ENCODE measurements at regions of chr11 and their contacts with region 1.

Region 1: DNA sequence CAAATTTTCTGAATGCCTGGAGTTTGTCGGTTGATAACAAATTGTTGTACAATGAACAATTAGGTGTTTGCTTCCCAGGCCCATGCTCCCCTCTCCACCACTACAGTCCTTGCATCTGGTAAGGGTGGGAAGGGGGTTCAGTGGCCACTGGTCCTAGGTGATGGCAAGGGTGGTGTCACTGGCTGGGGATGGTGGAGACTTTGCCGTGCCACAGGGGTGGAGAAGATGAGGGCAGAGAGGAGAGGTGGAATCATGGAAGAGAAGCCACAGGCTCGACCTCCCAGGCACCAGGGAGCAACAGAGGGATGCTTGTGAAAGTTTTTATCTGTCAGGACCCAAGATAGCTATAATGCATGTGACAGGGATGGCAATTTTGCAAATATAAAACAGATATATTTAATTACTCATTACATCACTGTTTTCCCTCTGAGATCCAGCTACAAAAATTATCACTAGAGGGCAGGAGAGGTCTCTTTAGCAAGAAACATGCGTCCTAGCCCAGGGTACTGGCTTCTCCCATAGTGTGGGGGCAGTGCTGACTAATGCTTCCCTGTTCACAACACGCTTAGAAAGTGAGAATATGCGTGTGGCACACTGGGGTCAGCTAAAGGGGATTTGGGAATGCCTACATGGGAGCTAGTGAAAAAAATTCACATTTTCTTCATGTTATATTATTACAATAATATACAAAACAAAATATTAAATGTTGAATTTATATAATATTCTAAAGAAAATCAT is 49.0 kb upstream of the AMPD3 start:
- DNase-seq: peak; percentile 81
- ATAC-seq: peak; percentile 87
- H3K4me3 ChIP-seq: no peak overlapping the region
- H3K27ac ChIP-seq: no peak overlapping the region
- H3K4me1 ChIP-seq: no peaks in the 10 kb centered on the region
- H3K27me3 ChIP-seq: no peaks in the 10 kb centered on the region

Region 2: GRCh38 chr11:10338287-10338686 is 67.7 kb before region 1 on chr11:
- intact Hi-C with region 1: no loop called
- DNase-seq: no peak
- ATAC-seq: peak; percentile 52
- H3K4me3 ChIP-seq: no peak overlapping the region
- H3K27ac ChIP-seq: no peak overlapping the region
- H3K4me1 ChIP-seq: no peaks in the 10 kb centered on the region
- H3K27me3 ChIP-seq: no peaks in the 10 kb centered on the region

Region 3: DNA sequence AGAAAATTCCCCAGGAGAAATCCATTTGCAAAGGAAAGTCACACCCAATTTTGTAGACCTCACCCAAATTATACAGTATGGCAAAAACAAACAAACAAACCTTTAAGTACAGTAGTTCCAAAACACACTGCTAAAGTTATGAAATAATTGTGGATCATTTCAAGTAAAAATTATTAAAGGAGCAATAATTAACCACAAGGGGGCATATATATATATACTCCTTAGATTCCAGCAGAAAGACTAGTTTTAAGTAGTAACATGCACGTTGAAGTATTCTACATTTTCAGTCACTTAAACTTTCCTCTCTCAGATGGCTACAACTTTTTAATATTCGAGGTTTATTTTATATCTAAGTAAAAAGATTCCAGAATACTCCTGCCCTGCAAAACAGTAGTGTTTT is 108.2 kb after region 1 on chr11:
- intact Hi-C with region 1: loop called (anchors 10 kb)
- DNase-seq: no peak
- ATAC-seq: no peak
- H3K4me3 ChIP-seq: no peak overlapping the region
- H3K27ac ChIP-seq: peak overlapping the region in 1 of 2 donors; percentile 67
- H3K4me1 ChIP-seq: peaks cover 4 to 8% of the 10 kb centered on the region in 2 donors
- H3K27me3 ChIP-seq: no peaks in the 10 kb centered on the region

Measured in aorta (tissue), 5 donors.